ENCODE measurements at regions of chr3 and their contacts with region 1.

Region 1: DNA sequence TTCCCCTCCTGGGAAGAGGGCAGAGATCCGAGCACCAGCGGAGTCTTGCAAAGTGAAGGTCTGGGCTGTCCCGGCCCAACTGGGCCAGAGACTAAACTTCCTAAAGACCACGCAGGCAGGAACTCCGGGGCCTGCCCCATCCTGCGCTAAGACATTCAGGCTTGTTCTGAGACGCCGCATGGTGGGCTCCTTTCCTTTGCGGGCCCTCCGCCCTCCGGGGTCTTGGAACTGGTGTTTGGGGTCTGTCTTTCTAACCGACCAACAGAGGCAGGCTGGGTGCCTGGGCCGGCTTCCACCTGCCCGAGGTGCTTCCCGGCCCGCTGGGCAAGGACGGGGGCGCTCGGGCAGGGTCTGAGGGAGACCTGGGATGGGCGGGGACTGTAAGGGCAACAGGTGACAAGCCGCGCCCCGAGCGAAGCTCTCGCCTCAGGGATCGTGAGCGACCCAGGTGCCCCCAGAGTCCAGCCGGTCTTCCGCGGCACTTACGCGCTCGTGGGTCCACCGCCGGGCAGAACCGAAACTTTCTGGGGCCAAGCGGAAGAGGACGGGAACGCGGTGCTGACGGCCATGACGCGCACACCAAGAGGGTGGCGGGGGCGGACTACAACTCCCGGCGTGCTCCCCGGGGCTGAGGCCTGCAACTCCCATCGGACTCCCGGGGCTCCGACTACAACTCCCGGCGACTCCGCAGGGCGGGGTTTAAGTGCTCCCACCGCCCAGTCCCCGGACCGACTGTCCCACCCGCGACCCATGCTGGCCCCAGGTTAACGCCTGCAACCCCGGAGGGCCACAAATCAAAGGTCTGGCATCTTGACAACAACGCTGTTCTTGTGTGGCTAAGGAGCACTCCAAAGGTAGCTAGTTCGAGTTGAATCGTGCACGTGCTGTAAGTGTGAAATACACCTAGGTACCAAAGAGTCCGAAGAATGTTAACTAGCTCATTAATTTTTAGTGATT is at the start of gene FYCO1:
- DNase-seq: peak; percentile 70 to 93 (median 85)
- ATAC-seq: peak; percentile 78
- H3K4me3 ChIP-seq: peak within 1 kb of the TSS; percentile 77 to 90
- H3K4me3 Mint-ChIP-seq: peak within 1 kb of the TSS; percentile 86
- H3K27ac ChIP-seq: peak within 1 kb of the TSS; percentile 77 to 93
- H3K27ac Mint-ChIP-seq: peak within 1 kb of the TSS; percentile 93
- H3K4me1 ChIP-seq: peaks cover 42% of the 10 kb centered on the region
- H3K4me1 Mint-ChIP-seq: peaks cover 44% of the 10 kb centered on the region
- H3K27me3 ChIP-seq: no peaks in the 10 kb centered on the region
- H3K27me3 Mint-ChIP-seq: no peaks in the 10 kb centered on the region
- CTCF ChIP-seq: no peak
- total RNA-seq, gene FYCO1: 16.6 to 16.7 TPM

Region 2: GRCh38 chr3:45343947-45344346 is 651.6 kb before region 1 on chr3:
- CTCF ChIA-PET with region 1: no interaction called
- POLR2A ChIA-PET with region 1: no interaction called
- intact Hi-C with region 1: no loop called
- DNase-seq: peak in 2 of 9 experiments; percentile 11 to 15
- ATAC-seq: no peak
- H3K4me3 ChIP-seq: no peak overlapping the region
- H3K4me3 Mint-ChIP-seq: no peak overlapping the region
- H3K27ac ChIP-seq: no peak overlapping the region
- H3K27ac Mint-ChIP-seq: no peak overlapping the region
- H3K4me1 ChIP-seq: no peaks in the 10 kb centered on the region
- H3K4me1 Mint-ChIP-seq: no peaks in the 10 kb centered on the region
- H3K27me3 ChIP-seq: peaks cover 0 to 3% of the 10 kb centered on the region in 2 experiments
- H3K27me3 Mint-ChIP-seq: no peaks in the 10 kb centered on the region
- CTCF ChIP-seq: no peak

Region 3: DNA sequence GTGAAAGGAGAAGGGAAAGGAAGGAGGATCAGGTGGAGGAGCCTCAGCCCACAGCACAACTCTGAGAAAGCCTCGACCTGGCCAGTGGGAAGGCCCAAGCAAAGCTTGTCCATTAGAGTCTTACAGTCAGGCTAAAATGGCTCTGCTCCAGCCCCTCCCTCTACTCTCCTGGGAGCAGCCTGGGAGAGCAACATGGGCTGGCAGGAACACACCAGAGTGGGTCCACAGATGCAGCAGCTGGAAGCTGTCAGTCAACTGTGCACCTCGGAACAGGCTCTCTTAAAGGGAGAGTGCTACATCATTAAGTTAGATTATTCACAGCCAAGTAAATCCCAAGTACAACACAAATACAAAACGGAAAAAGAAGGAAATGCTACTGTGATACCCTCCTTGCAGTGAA is 499.0 kb before region 1 on chr3:
- CTCF ChIA-PET with region 1: no interaction called
- POLR2A ChIA-PET with region 1: no interaction called
- intact Hi-C with region 1: no loop called
- DNase-seq: no peak
- ATAC-seq: no peak
- H3K4me3 ChIP-seq: no peak overlapping the region
- H3K4me3 Mint-ChIP-seq: no peak overlapping the region
- H3K27ac ChIP-seq: no peak overlapping the region
- H3K27ac Mint-ChIP-seq: peak overlapping the region; percentile 47
- H3K4me1 ChIP-seq: peaks cover 26% of the 10 kb centered on the region
- H3K4me1 Mint-ChIP-seq: peaks cover 26% of the 10 kb centered on the region
- H3K27me3 ChIP-seq: no peaks in the 10 kb centered on the region
- H3K27me3 Mint-ChIP-seq: no peaks in the 10 kb centered on the region
- CTCF ChIP-seq: no peak

Region 4: GRCh38 chr3:45593708-45594609 is 401.6 kb before region 1 on chr3:
- CTCF ChIA-PET with region 1: no interaction called
- POLR2A ChIA-PET with region 1: no interaction called
- intact Hi-C with region 1: loop called in 1 of 2 experiments (anchors 10 kb)
- DNase-seq: peak; percentile 35 to 84 (median 64)
- ATAC-seq: peak; percentile 80
- H3K4me3 ChIP-seq: peak overlapping the region; percentile 62 to 93
- H3K4me3 Mint-ChIP-seq: peak overlapping the region; percentile 89
- H3K27ac ChIP-seq: peak overlapping the region; percentile 62 to 67
- H3K27ac Mint-ChIP-seq: peak overlapping the region; percentile 88
- H3K4me1 ChIP-seq: peaks cover 57% of the 10 kb centered on the region
- H3K4me1 Mint-ChIP-seq: peaks cover 58% of the 10 kb centered on the region
- H3K27me3 ChIP-seq: no peaks in the 10 kb centered on the region
- H3K27me3 Mint-ChIP-seq: no peaks in the 10 kb centered on the region
- CTCF ChIP-seq: no peak

Region 5: DNA sequence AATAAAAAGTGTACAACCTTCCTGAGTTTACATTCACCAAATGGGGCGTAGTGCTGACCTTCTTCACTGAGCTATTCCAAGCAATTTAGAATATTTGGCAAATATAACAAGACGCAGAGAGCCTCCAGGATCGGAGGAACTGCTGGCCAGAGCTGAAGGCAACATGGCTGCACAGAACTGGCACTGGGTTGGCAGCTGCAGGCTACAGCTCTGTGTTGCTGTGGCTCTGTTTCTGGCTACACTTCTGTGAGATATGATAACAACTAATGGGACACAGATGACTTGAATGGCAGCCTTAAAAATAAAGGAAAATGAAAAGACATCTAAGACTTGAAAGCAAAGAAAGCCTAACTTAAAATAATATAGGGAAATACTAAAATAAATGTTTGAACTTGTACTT is 188.4 kb before region 1 on chr3:
- CTCF ChIA-PET with region 1: no interaction called
- POLR2A ChIA-PET with region 1: no interaction called
- intact Hi-C with region 1: no loop called
- DNase-seq: no peak
- ATAC-seq: no peak
- H3K4me3 ChIP-seq: no peak overlapping the region
- H3K4me3 Mint-ChIP-seq: no peak overlapping the region
- H3K27ac ChIP-seq: no peak overlapping the region
- H3K27ac Mint-ChIP-seq: no peak overlapping the region
- H3K4me1 ChIP-seq: no peaks in the 10 kb centered on the region
- H3K4me1 Mint-ChIP-seq: peaks cover 9% of the 10 kb centered on the region
- H3K27me3 ChIP-seq: no peaks in the 10 kb centered on the region
- H3K27me3 Mint-ChIP-seq: no peaks in the 10 kb centered on the region
- CTCF ChIP-seq: no peak

Region 6: DNA sequence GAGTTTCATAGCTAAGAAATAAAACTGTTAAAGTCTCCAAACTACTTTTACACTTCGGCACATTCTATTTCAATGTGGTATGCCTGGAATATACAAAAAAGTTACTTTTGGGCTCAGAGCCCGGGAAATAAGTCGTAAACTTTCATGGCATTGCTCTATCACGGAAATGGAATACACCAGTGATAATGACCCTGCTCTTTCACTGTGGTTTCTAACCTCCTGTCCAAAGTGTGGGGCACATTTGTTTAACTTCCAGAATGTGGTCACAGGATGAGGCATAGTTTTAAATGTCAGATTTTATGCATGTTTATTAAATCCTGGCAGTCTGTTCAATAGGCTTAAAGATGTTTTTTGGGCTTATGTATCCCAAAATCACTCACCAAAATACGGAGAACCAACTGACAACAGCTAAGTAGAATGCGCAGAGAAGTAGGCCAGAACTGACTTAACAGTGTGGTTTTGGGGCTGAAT is 47.2 kb before region 1 on chr3:
- CTCF ChIA-PET with region 1: interaction called, 8 read pairs
- POLR2A ChIA-PET with region 1: interaction called, 28 read pairs
- intact Hi-C with region 1: loop called in 1 of 2 experiments (anchors 2 kb)
- DNase-seq: no peak
- ATAC-seq: no peak
- H3K4me3 ChIP-seq: no peak overlapping the region
- H3K4me3 Mint-ChIP-seq: no peak overlapping the region
- H3K27ac ChIP-seq: peak overlapping the region in 1 of 2 experiments; percentile 73
- H3K27ac Mint-ChIP-seq: peak overlapping the region; percentile 85
- H3K4me1 ChIP-seq: peaks cover 54% of the 10 kb centered on the region
- H3K4me1 Mint-ChIP-seq: peaks cover 90% of the 10 kb centered on the region
- H3K27me3 ChIP-seq: no peaks in the 10 kb centered on the region
- H3K27me3 Mint-ChIP-seq: no peaks in the 10 kb centered on the region
- CTCF ChIP-seq: no peak

Region 7: GRCh38 chr3:45972534-45973402 is 22.7 kb before region 1 on chr3:
- CTCF ChIA-PET with region 1: interaction called, 9 read pairs
- POLR2A ChIA-PET with region 1: interaction called, 21 read pairs
- intact Hi-C with region 1: loop called (anchors 1 to 2 kb)
- DNase-seq: peak in 1 of 9 experiments; percentile 34
- ATAC-seq: no peak
- H3K4me3 ChIP-seq: no peak overlapping the region
- H3K4me3 Mint-ChIP-seq: no peak overlapping the region
- H3K27ac ChIP-seq: peak overlapping the region in 1 of 2 experiments; percentile 46
- H3K27ac Mint-ChIP-seq: peak overlapping the region; percentile 69
- H3K4me1 ChIP-seq: peaks cover 34% of the 10 kb centered on the region
- H3K4me1 Mint-ChIP-seq: peaks cover 78% of the 10 kb centered on the region
- H3K27me3 ChIP-seq: no peaks in the 10 kb centered on the region
- H3K27me3 Mint-ChIP-seq: no peaks in the 10 kb centered on the region
- CTCF ChIP-seq: no peak

Region 8: GRCh38 chr3:46065294-46065721 is 69.8 kb after region 1 on chr3:
- CTCF ChIA-PET with region 1: interaction called, 11 read pairs
- POLR2A ChIA-PET with region 1: interaction called, 10 read pairs
- intact Hi-C with region 1: loop called (anchors 1 to 5 kb)
- DNase-seq: peak; percentile 62 to 97 (median 79)
- ATAC-seq: peak; percentile 87
- H3K4me3 ChIP-seq: no peak overlapping the region
- H3K4me3 Mint-ChIP-seq: peak overlapping the region; percentile 37
- H3K27ac ChIP-seq: peak overlapping the region in 1 of 2 experiments; percentile 63
- H3K27ac Mint-ChIP-seq: peak overlapping the region; percentile 88
- H3K4me1 ChIP-seq: peaks cover 78% of the 10 kb centered on the region
- H3K4me1 Mint-ChIP-seq: peaks cover 76% of the 10 kb centered on the region
- H3K27me3 ChIP-seq: no peaks in the 10 kb centered on the region
- H3K27me3 Mint-ChIP-seq: no peaks in the 10 kb centered on the region
- CTCF ChIP-seq: no peak

Region 9: GRCh38 chr3:46163318-46164041 is 168.0 kb after region 1 on chr3:
- CTCF ChIA-PET with region 1: no interaction called
- POLR2A ChIA-PET with region 1: no interaction called
- intact Hi-C with region 1: no loop called
- DNase-seq: no peak
- ATAC-seq: no peak
- H3K4me3 ChIP-seq: no peak overlapping the region
- H3K4me3 Mint-ChIP-seq: no peak overlapping the region
- H3K27ac ChIP-seq: no peak overlapping the region
- H3K27ac Mint-ChIP-seq: no peak overlapping the region
- H3K4me1 ChIP-seq: no peaks in the 10 kb centered on the region
- H3K4me1 Mint-ChIP-seq: no peaks in the 10 kb centered on the region
- H3K27me3 ChIP-seq: no peaks in the 10 kb centered on the region
- H3K27me3 Mint-ChIP-seq: no peaks in the 10 kb centered on the region
- CTCF ChIP-seq: no peak